ENCODE measurements at regions of chr13 and their contacts with region 1.

Region 1: DNA sequence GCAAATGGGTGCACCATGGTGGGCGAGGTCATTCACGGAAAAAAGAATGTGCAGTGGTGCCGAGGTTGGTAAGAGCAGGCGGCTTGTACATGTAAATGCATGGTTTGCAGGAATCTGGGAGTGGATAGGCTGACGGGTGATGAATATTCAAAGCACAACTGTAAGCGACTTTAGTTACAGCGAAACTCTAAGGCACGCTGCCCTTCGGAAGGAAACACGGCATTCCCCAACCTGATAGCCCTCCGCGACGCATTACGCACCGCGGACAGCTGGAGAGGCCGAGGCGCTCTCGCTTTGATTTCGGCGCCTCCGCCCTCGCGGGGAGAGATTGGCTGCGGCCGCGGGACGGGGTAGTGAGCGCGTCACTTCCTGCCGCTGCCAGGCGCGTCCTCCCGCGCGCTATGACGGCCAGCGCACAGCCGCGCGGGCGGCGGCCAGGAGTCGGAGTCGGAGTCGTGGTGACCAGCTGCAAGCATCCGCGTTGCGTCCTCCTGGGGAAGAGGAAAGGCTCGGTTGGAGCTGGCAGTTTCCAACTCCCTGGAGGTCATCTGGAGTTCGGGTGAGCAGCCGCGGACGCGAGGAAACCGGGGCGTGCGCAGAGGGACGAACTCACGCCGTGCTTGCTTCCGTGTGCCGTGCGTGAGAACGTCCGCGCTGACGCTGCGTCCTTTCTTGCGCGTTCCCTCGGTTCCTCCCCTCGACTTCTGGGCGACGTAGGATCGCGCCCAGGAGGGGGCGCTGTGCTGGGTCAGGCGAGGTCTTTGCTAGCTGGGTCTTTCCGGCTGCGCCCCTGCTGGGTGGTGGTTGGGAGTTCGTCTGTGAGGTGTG is at the start of gene NUDT15:
- DNase-seq: peak; percentile 94
- H3K4me3 Mint-ChIP-seq: peak within 1 kb of the TSS; percentile 98
- H3K27ac Mint-ChIP-seq: peak within 1 kb of the TSS; percentile 99
- H3K4me1 Mint-ChIP-seq: peaks cover 46% of the 10 kb centered on the region
- H3K27me3 Mint-ChIP-seq: no peaks in the 10 kb centered on the region
- total RNA-seq, gene NUDT15: 15.3 and 16.8 TPM in 2 replicates

Region 2: DNA sequence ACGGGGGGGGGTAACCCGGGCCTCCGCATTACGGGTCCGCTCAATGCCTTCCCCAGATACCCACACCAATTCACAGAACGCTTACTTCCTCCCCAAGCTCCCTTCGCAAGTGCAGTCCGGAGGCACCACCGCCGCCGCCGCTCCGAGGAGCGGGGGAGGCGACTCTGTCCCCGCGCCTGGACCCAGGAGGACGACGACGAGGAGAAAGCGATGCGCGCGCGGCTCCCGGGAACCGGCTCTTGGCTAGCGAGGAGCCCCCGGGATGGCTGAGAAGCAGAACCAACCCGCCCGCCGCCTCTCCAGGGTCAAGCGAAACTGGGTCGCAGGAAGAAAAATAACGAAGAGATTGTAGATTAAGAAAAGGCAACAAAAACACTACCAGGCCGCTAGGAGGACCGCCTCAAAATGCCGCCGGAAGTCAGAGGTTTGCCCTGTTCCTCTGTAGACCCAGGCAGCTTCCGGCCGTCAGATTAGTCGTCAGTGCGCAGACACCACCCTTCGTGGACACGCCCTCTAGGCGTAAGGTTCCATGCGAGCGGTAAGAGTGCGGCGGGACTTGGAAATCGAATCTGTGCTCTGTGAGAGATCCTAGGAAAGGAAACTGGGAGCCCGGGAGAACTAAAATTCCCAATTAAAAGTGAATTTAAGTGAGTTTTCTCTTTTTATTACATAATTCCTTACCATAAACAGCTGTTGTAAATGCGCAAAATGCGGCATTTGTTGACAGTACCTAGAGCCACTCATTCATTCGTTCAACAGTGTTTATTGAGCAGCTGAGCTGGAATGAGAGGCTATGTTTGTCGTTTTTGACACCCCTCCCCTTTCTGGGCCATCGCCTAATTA is 1985.0 kb before region 1 on chr13 and contains the start of gene ZC3H13:
- intact Hi-C with region 1: loop called (anchors 5 kb)
- DNase-seq: peak; percentile 89
- H3K4me3 Mint-ChIP-seq: peak within 1 kb of the TSS; percentile 93
- H3K27ac Mint-ChIP-seq: peak within 1 kb of the TSS; percentile 94
- H3K4me1 Mint-ChIP-seq: peaks cover 40% of the 10 kb centered on the region
- H3K27me3 Mint-ChIP-seq: peaks cover 15% of the 10 kb centered on the region
- total RNA-seq, gene ZC3H13: 52.0 and 59.4 TPM in 2 replicates

Region 3: DNA sequence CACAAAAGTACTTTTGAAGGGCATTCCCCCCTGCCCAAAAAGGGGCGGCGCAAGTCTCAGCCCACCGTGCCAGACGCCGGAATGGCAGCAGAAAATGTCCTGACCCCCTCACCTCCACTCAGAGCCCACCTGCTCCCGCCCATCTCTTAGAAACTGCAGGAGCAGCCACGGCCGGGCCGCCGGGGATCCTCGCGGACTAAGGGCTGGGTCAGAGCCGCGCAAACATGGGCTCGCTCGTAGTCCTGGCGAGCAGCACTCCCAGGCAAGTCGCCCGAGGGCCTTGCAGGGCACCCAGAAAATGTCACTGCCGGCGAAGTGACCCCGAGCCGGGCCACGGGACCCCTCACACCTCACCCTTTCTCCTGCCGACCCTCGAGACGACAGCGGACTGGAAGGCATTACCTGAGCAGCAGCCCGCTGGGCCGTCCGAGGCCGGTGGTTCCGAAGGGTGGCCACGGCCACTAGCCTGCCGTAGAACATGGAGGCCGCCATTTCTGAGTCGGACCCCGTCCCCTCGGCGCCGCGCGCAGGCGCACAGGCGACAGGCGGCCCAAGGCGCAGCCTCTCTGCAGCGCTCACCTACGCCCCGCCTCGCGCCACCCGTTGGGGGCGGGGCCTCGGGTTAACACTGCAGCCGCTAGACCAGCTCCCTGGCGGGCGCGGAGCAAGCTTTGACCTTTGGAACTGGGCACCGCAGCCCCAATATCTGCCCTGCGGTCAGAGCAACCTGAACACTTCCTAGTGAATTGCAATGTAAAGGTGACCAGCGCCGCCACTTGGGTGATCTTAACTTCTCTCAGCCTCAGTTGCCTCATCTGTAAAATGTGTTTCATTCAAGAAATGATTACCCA is 36.6 kb before region 1 on chr13 and contains the start of gene SUCLA2:
- intact Hi-C with region 1: loop called (anchors 1 kb)
- DNase-seq: peak; percentile 93
- H3K4me3 Mint-ChIP-seq: peak within 1 kb of the TSS; percentile 95
- H3K27ac Mint-ChIP-seq: peak within 1 kb of the TSS; percentile 97
- H3K4me1 Mint-ChIP-seq: peaks cover 31% of the 10 kb centered on the region
- H3K27me3 Mint-ChIP-seq: peaks cover 2% of the 10 kb centered on the region
- total RNA-seq, gene SUCLA2: 40.4 and 45.3 TPM in 2 replicates

Region 4: GRCh38 chr13:48184260-48184659 is 146.7 kb after region 1 on chr13:
- intact Hi-C with region 1: no loop called
- DNase-seq: no peak
- H3K4me3 Mint-ChIP-seq: no peak overlapping the region
- H3K27ac Mint-ChIP-seq: no peak overlapping the region
- H3K4me1 Mint-ChIP-seq: peaks cover 21% of the 10 kb centered on the region
- H3K27me3 Mint-ChIP-seq: no peaks in the 10 kb centered on the region

Region 5: GRCh38 chr13:48303359-48304142 is 266.0 kb after region 1 on chr13 and contains the start of gene RB1:
- intact Hi-C with region 1: loop called (anchors 1 kb)
- DNase-seq: peak; percentile 88
- H3K4me3 Mint-ChIP-seq: peak within 1 kb of the TSS; percentile 99
- H3K27ac Mint-ChIP-seq: peak within 1 kb of the TSS; percentile 97
- H3K4me1 Mint-ChIP-seq: peaks cover 30% of the 10 kb centered on the region
- H3K27me3 Mint-ChIP-seq: no peaks in the 10 kb centered on the region
- total RNA-seq, gene RB1: 26.5 and 28.6 TPM in 2 replicates

Region 6: DNA sequence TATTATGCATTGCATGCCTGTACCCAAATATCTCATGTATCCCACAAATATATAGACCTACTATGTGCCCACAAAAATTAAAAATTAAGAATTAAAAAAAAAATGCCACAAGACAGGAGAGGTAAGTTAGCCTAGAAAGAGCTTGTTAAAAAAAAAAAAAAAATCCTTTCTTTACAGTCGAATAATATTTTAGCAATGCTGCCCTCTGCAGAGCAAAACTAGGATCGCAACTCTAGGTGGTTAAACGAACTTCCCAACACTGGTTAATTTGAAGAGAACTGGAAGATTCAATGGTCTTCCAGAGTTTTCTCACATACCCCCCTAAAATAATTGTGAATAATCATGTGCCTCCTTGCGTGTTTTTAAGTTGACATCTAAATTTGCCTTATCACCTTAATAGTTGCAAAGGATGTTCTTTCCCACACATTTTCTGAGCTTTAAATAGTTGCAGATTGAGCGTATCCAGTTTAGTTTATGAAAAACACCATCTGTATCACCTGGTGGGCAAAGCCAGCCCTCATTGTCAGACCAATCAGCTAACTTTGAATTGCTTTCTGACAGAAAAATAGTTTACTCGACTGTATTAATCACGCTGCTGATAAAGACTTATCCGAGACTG is 542.7 kb after region 1 on chr13:
- intact Hi-C with region 1: loop called (anchors 5 kb)
- DNase-seq: peak; percentile 44
- H3K4me3 Mint-ChIP-seq: no peak overlapping the region
- H3K27ac Mint-ChIP-seq: no peak overlapping the region
- H3K4me1 Mint-ChIP-seq: peaks cover 16% of the 10 kb centered on the region
- H3K27me3 Mint-ChIP-seq: peaks cover 63% of the 10 kb centered on the region

Measured in activated T-helper 1 cell treated with anti-CD3 and anti-CD28 coated beads, Interleukin-12 subunit alpha, Interleukin-12 subunit beta, Interleukin-2, Interleukin-4 antibody, amounts not matched to agents 30 ng/mL and 10 ng/mL and 1 ng/mL, durations not matched to agents 14 hours and 24 hours and 36 hours (primary cell).